ENCODE measurements at regions of chr20 and their contacts with region 1.

Region 1: DNA sequence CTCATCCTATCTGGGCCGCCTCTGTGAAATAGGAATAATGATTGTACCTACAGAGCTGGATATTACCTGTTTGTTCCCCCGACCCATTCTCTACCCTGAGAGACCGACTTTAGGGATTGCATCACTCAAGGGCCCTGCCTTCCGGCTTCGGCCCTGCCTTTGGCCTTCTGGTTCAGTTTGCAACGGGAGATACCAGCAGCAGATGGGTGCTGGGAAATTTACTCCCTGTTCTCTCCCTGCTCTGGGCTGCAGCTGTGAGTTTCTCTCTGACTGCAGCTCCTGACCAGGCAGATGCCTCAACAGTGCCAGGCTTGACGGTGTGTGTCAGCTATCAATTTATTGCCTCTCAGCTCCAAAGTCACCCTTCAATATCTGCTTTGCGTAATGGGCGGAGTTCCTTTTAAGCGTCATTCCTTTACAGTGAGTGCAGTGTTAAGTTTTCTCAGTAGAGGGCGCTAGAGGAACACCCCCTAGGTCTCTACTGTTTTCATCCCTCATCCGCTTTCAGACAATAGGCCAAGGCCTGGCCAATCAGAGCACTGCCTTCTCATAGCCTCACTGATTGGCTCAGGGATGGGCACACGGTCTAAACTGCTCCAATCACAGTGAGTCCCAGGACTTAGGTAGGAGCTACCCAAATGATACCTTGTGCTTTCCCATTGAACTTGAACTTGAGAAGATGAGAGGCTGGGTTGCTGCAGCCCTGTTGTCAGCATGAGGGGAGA is 30.0 kb downstream of the KCNG1 start:
- DNase-seq: no peak
- ATAC-seq: peak; percentile 45 to 60 (median 50)
- H3K4me3 ChIP-seq: no peak overlapping the region
- H3K27ac ChIP-seq: no peak overlapping the region
- H3K4me1 ChIP-seq: no peaks in the 10 kb centered on the region
- H3K27me3 ChIP-seq: no peaks in the 10 kb centered on the region
- CTCF ChIP-seq: peak; percentile 34 to 53 (median 44)
- POLR2A ChIP-seq: no peak

Region 2: DNA sequence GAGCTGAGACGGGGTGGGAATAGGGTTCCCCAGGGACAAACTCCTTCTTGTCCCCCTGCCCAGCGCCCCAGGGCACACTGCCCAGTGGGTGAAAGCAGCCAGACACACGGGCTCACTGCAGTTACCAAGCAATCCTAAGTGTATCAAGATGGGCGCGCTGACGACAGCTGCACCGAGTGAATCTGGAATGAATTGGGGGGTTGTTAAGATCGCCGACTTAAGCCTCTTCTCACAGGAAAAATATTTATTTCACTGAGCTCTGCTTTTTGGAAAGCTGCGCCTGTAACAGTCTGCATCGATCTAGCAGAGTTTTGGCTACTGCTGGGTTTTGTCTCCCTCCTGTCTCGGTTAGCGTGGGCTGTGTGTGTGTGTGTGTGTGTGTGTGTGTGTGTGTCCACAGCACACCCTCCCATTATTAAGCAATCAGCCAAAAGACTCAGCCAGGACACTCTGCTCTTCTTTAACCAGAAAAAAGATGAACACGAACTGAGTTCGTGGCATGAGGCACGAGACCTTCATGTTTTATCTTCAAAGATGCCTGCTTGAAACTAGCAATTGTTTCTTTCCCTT is 337.5 kb before region 1 on chr20:
- intact Hi-C with region 1: no loop called
- DNase-seq: peak; percentile 71 to 87 (median 82)
- ATAC-seq: peak; percentile 72 to 86 (median 78)
- H3K4me3 ChIP-seq: peak overlapping the region in 2 of 3 donors; percentile 6 to 26
- H3K27ac ChIP-seq: peak overlapping the region; percentile 13 to 84 (median 73)
- H3K4me1 ChIP-seq: peaks cover 0 to 40% (median 17%) of the 10 kb centered on the region in 4 donors
- H3K27me3 ChIP-seq: no peaks in the 10 kb centered on the region
- CTCF ChIP-seq: no peak
- POLR2A ChIP-seq: peak; percentile 40

Region 3: GRCh38 chr20:51306503-51307358 is 313.8 kb after region 1 on chr20:
- intact Hi-C with region 1: loop called (anchors 5 kb)
- DNase-seq: peak; percentile 72 to 77 (median 74)
- ATAC-seq: peak; percentile 93 to 98 (median 96)
- H3K4me3 ChIP-seq: no peak overlapping the region
- H3K27ac ChIP-seq: no peak overlapping the region
- H3K4me1 ChIP-seq: no peaks in the 10 kb centered on the region
- H3K27me3 ChIP-seq: no peaks in the 10 kb centered on the region
- CTCF ChIP-seq: peak; percentile 71 to 98 (median 93)
- POLR2A ChIP-seq: no peak